ENCODE measurements at regions of chr2 and their contacts with region 1.

Region 1: DNA sequence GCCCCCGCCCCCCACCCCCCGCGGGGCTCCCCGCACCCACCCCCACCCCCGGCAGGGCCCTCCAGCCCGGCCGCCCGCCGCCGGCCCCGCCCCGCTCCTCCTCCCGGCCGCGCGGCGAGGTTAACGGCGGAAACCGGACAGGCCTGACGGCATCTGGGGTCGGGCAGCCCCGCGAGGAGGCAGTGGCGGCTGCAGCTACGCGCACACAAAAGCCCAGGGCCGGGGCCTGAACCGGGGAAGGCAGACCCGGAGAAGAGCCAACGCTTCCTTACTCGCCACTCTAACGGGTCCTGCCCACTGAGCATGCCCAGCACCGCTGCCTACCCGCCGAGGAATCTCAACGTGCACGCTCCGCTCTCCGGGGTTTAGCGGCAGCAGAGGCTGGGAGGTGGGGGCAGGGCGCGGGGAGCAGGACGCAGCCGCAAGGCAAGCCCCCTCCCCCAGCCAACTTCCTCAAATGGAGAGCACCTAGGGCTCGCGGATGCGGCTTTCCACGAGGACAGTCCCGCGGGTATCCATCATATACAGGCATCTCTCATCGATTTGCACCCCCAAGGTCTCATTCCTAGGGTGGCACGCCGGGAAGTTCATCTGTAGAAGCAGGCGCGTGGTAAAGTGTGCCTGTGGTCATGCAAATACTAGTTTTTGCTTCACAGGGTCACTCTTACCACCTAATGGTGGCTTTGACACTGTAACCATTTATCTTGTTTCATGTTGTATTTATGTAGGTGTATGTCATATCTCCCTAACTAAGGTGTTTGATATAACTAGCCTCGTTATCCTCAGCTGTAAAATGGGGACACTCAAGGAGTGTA is at the start of gene MEMO1:
- DNase-seq: peak; percentile 97
- H3K4me3 ChIP-seq: peak within 1 kb of the TSS; percentile 73 to 97 (median 85)
- H3K27ac ChIP-seq: peak within 1 kb of the TSS; percentile 89 to 96 (median 94)
- H3K4me1 ChIP-seq: peaks cover 21 to 41% (median 31%) of the 10 kb centered on the region in 4 donors
- H3K27me3 ChIP-seq: no peaks in the 10 kb centered on the region
- CTCF ChIP-seq: no peak
- EP300 ChIP-seq: no peak
- POLR2A ChIP-seq: peak; percentile 69
- total RNA-seq, gene MEMO1: 25.0 to 40.7 (median 33.2) TPM

Region 2: GRCh38 chr2:32039447-32040219 is 28.8 kb after region 1 on chr2 and contains the start of gene DPY30:
- intact Hi-C with region 1: loop called (anchors 5 kb)
- DNase-seq: peak; percentile 96
- H3K4me3 ChIP-seq: peak within 1 kb of the TSS; percentile 68 to 99 (median 90)
- H3K27ac ChIP-seq: peak within 1 kb of the TSS; percentile 77 to 87 (median 84)
- H3K4me1 ChIP-seq: peaks cover 15 to 20% (median 16%) of the 10 kb centered on the region in 4 donors
- H3K27me3 ChIP-seq: no peaks in the 10 kb centered on the region
- CTCF ChIP-seq: peak in 1 of 3 experiments; percentile 14
- EP300 ChIP-seq: no peak
- POLR2A ChIP-seq: no peak
- total RNA-seq, gene DPY30: 52.6 to 83.1 (median 61.1) TPM